GM12878 (cell line): ENCODE measurements at regions of chrX and their contacts with region 1.

Region 1: GRCh38 chrX:136268051-136269048 is 17.1 kb upstream of the MAP7D3 start:
- DNase-seq: no peak
- ATAC-seq: peak; percentile 91
- H3K4me3 ChIP-seq: no peak overlapping the region
- H3K27ac ChIP-seq: no peak overlapping the region
- H3K4me1 ChIP-seq: no peaks in the 10 kb centered on the region; the same call in 1 of the 2 replicates
- H3K27me3 ChIP-seq: no peaks in the 10 kb centered on the region
- CTCF ChIP-seq: peak; percentile 74 to 78 (median 76); a peak in 5 of 6 replicates
- EP300 ChIP-seq: no peak
- POLR2A ChIP-seq: no peak
- RAD21 ChIP-seq: peak; percentile 87

Region 2: GRCh38 chrX:136028251-136028984 is 239.9 kb before region 1 on chrX:
- CTCF ChIA-PET with region 1: interaction called, 103 read pairs
- POLR2A ChIA-PET with region 1: interaction called, 5 read pairs
- RAD21 ChIA-PET with region 1: interaction called, 62 read pairs
- SMC1A ChIA-PET with region 1: interaction called, 42 read pairs
- in situ Hi-C with region 1: loop called (anchors 10 kb)
- intact Hi-C with region 1: loop called (anchors 1 kb)
- DNase-seq: no peak
- ATAC-seq: peak; percentile 81
- H3K4me3 ChIP-seq: no peak overlapping the region
- H3K27ac ChIP-seq: no peak overlapping the region
- H3K4me1 ChIP-seq: no peaks in the 10 kb centered on the region
- H3K27me3 ChIP-seq: no peaks in the 10 kb centered on the region
- CTCF ChIP-seq: peak; percentile 44 to 64 (median 62); a peak in 5 of 6 replicates
- EP300 ChIP-seq: no peak
- POLR2A ChIP-seq: no peak
- RAD21 ChIP-seq: peak; percentile 82

Region 3: GRCh38 chrX:136162831-136163570 is 105.3 kb before region 1 on chrX:
- CTCF ChIA-PET with region 1: interaction called, 15 read pairs
- POLR2A ChIA-PET with region 1: no interaction called
- RAD21 ChIA-PET with region 1: interaction called, 3 read pairs
- SMC1A ChIA-PET with region 1: interaction called, 6 read pairs
- in situ Hi-C with region 1: no loop called
- intact Hi-C with region 1: no loop called
- DNase-seq: no peak
- ATAC-seq: peak; percentile 91
- H3K4me3 ChIP-seq: no peak overlapping the region
- H3K27ac ChIP-seq: no peak overlapping the region
- H3K4me1 ChIP-seq: no peaks in the 10 kb centered on the region
- H3K27me3 ChIP-seq: no peaks in the 10 kb centered on the region
- CTCF ChIP-seq: peak; percentile 67 to 77 (median 69)
- EP300 ChIP-seq: no peak
- POLR2A ChIP-seq: no peak
- RAD21 ChIP-seq: peak; percentile 72

Region 4: GRCh38 chrX:136246201-136246600 is 22.1 kb before region 1 on chrX:
- CTCF ChIA-PET with region 1: interaction called, 18 read pairs
- POLR2A ChIA-PET with region 1: no interaction called
- RAD21 ChIA-PET with region 1: no interaction called
- SMC1A ChIA-PET with region 1: interaction called, 3 read pairs
- in situ Hi-C with region 1: no loop called
- intact Hi-C with region 1: no loop called
- DNase-seq: no peak
- ATAC-seq: no peak
- H3K4me3 ChIP-seq: no peak overlapping the region
- H3K27ac ChIP-seq: no peak overlapping the region
- H3K4me1 ChIP-seq: no peaks in the 10 kb centered on the region
- H3K27me3 ChIP-seq: no peaks in the 10 kb centered on the region
- CTCF ChIP-seq: no peak
- EP300 ChIP-seq: no peak
- POLR2A ChIP-seq: no peak
- RAD21 ChIP-seq: no peak

Region 5: GRCh38 chrX:136251041-136251991 is 17.0 kb before region 1 on chrX and contains the start of gene MAP7D3:
- CTCF ChIA-PET with region 1: interaction called, 18 read pairs
- POLR2A ChIA-PET with region 1: no interaction called
- RAD21 ChIA-PET with region 1: no interaction called
- SMC1A ChIA-PET with region 1: interaction called, 4 read pairs
- in situ Hi-C with region 1: no loop called
- intact Hi-C with region 1: no loop called
- DNase-seq: no peak
- ATAC-seq: peak; percentile 96
- H3K4me3 ChIP-seq: peak within 1 kb of the TSS; percentile 70
- H3K27ac ChIP-seq: no peak within 1 kb of the TSS; the same call in none of the 2 replicates
- H3K4me1 ChIP-seq: no peaks in the 10 kb centered on the region
- H3K27me3 ChIP-seq: no peaks in the 10 kb centered on the region
- CTCF ChIP-seq: no peak
- EP300 ChIP-seq: no peak
- POLR2A ChIP-seq: peak; percentile 91
- RAD21 ChIP-seq: no peak
- polyA plus RNA-seq, gene MAP7D3: 9.1 to 10.2 TPM